Activated naive CD4-positive, alpha-beta T cell treated with anti-CD3 and anti-CD28 coated beads for 36 hours (primary cell): ENCODE measurements at regions of chr14 and their contacts with region 1.

Region 1: DNA sequence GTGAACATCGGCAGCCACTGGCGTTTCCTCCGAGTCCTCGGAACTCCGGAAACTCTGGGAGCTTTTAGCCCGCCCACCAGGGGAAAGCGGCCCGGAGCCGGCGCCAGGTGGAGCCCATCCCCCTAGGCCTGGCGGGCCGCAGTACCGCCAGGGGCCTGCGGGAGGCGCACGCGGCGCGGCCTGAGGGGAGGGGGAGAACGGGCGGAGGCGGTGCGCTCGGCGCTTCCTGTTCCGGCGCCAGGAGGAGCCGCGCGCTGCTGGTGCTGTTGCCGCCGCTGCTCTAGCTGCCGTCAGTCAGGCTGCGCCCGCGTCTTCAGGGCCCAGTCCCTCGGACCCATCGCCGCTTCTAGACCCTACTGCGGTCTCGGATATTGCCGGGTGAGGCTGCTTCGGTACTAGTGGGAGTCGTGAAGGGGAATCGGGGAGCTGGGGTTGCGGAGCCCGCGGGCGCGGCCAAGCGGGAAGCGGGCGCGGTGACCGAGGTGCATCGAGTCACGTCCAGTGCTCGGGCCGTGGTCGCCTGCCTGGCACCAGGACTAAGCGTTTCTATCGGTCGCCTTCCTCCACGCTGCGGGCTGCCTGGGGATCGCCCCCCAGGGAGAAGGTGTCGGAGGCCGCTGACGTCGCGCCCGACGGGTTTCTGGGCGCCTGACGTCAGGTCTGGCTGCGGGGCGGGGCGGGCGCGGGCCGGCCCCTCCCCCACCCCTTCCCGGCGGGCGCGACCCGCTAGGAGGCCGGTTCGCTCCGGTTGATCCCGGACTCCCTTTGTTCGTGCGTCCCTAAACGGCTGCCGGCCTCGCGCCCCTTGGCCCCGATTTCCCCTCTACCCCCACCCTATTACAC is at the start of gene MAPK1IP1L:
- DNase-seq: peak; percentile 90
- H3K4me3 Mint-ChIP-seq: peak within 1 kb of the TSS; percentile 86
- H3K27ac Mint-ChIP-seq: peak within 1 kb of the TSS; percentile 95
- H3K4me1 Mint-ChIP-seq: peaks cover 42% of the 10 kb centered on the region
- H3K27me3 Mint-ChIP-seq: no peaks in the 10 kb centered on the region
- total RNA-seq, gene MAPK1IP1L: 78.2 to 83.4 TPM

Region 2: GRCh38 chr14:54981698-54982097 is 69.9 kb before region 1 on chr14:
- CTCF ChIA-PET with region 1: no interaction called
- intact Hi-C with region 1: no loop called
- DNase-seq: no peak
- H3K4me3 Mint-ChIP-seq: no peak overlapping the region
- H3K27ac Mint-ChIP-seq: no peak overlapping the region
- H3K4me1 Mint-ChIP-seq: no peaks in the 10 kb centered on the region
- H3K27me3 Mint-ChIP-seq: no peaks in the 10 kb centered on the region

Region 3: DNA sequence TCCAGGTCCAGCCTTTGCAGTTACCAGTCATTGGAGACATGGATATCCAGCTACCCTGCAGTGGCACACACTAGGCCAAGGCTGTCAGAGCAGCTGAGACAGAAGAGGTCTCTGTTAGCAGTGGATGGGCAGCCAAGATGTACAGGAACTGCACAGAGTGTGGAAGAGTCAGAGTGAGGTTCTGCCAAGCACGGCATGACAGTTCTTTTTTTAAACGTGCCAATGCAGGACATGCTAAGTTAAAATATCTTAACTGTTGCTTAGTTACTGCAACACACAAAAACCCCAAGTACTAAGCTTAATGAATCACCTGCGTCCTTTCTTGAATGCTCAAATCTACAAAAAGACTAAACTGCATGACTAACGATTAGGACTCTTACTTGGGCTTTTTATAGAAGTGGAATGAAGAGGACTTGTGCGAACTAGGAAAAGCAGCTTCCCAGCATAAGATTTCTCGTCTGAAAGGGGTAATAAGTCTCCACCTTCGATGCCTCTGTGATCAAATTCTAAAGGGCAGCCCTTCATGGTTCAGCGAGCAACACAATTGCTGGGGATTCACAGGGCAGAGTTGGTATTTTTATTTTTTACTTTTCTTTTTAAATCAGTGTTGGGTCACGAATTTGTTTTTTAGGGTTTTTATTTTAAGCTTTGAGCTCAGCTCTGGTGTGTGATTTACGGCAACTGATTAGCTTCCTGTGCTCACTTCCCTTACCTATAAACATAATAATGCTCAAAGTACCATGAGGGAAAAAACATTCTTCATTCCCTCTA is 20.4 kb after region 1 on chr14:
- CTCF ChIA-PET with region 1: interaction called, 13 read pairs
- intact Hi-C with region 1: loop called (anchors 1 kb)
- DNase-seq: peak; percentile 72
- H3K4me3 Mint-ChIP-seq: peak overlapping the region; percentile 51
- H3K27ac Mint-ChIP-seq: peak overlapping the region; percentile 88
- H3K4me1 Mint-ChIP-seq: peaks cover 31% of the 10 kb centered on the region
- H3K27me3 Mint-ChIP-seq: no peaks in the 10 kb centered on the region

Region 4: GRCh38 chr14:55102141-55102621 is 50.5 kb after region 1 on chr14:
- CTCF ChIA-PET with region 1: interaction called, 6 read pairs
- intact Hi-C with region 1: loop called (anchors 2 kb)
- DNase-seq: peak; percentile 70
- H3K4me3 Mint-ChIP-seq: no peak overlapping the region
- H3K27ac Mint-ChIP-seq: no peak overlapping the region
- H3K4me1 Mint-ChIP-seq: peaks cover 38% of the 10 kb centered on the region
- H3K27me3 Mint-ChIP-seq: no peaks in the 10 kb centered on the region

Region 5: GRCh38 chr14:55191203-55192053 is 139.8 kb after region 1 on chr14 and contains the start of gene DLGAP5:
- CTCF ChIA-PET with region 1: interaction called, 3 read pairs
- intact Hi-C with region 1: loop called (anchors 1 kb)
- DNase-seq: peak; percentile 97
- H3K4me3 Mint-ChIP-seq: peak within 1 kb of the TSS; percentile 99
- H3K27ac Mint-ChIP-seq: peak within 1 kb of the TSS; percentile 89
- H3K4me1 Mint-ChIP-seq: peaks cover 26% of the 10 kb centered on the region
- H3K27me3 Mint-ChIP-seq: peaks cover 2% of the 10 kb centered on the region
- total RNA-seq, gene DLGAP5: 117 to 120 TPM